ENCODE measurements at regions of chr4 and their contacts with region 1.

Region 1: GRCh38 chr4:47485047-47485692 is at the start of gene ATP10D:
- DNase-seq: peak; percentile 90 to 93 (median 91)
- H3K4me3 ChIP-seq: peak within 1 kb of the TSS; percentile 64 to 94 (median 94)
- H3K4me3 Mint-ChIP-seq: peak within 1 kb of the TSS; percentile 98
- H3K27ac ChIP-seq: peak within 1 kb of the TSS; percentile 93 to 97
- H3K27ac Mint-ChIP-seq: peak within 1 kb of the TSS; percentile 98 to 100 (median 99)
- H3K4me1 ChIP-seq: peaks cover 38 to 60% of the 10 kb centered on the region in 2 donors
- H3K4me1 Mint-ChIP-seq: peaks cover 38% of the 10 kb centered on the region
- H3K27me3 ChIP-seq: no peaks in the 10 kb centered on the region
- H3K27me3 Mint-ChIP-seq: no peaks in the 10 kb centered on the region
- CTCF ChIP-seq: no peak
- polyA plus RNA-seq, gene ATP10D: 8.4 to 16.9 (median 14.1) TPM

Region 2: DNA sequence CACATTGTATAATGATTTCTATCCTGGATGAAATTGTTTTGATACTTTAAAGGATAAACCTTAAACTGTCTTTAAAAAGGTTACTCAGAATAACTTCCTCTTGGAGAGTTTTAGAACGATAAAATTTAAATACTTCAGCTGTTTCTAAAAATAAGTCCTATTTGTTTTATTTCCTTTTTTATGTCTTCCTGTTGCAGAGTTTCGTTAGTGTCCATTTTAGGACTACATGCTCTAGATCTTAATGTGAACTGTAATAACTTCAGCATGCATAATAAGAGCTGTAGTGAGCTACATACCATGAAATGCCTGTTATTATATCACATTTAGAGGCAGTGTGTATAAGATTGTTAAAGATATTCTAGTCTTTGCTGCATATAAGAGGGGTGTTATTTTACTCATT is 14.5 kb after region 1 on chr4:
- intact Hi-C with region 1: no loop called
- DNase-seq: peak in 1 of 3 donors; percentile 32
- H3K4me3 ChIP-seq: peak overlapping the region; percentile 2 to 59 (median 21)
- H3K4me3 Mint-ChIP-seq: no peak overlapping the region
- H3K27ac ChIP-seq: peak overlapping the region in 1 of 2 donors; percentile 77
- H3K27ac Mint-ChIP-seq: no peak overlapping the region
- H3K4me1 ChIP-seq: peaks cover 23 to 24% of the 10 kb centered on the region in 2 donors
- H3K4me1 Mint-ChIP-seq: peaks cover 5% of the 10 kb centered on the region
- H3K27me3 ChIP-seq: no peaks in the 10 kb centered on the region
- H3K27me3 Mint-ChIP-seq: no peaks in the 10 kb centered on the region
- CTCF ChIP-seq: no peak

Region 3: GRCh38 chr4:48033825-48034413 is 548.7 kb after region 1 on chr4:
- intact Hi-C with region 1: loop called in 1 of 2 experiments (anchors 10 kb)
- DNase-seq: peak; percentile 38 to 74 (median 65)
- H3K4me3 ChIP-seq: no peak overlapping the region
- H3K4me3 Mint-ChIP-seq: no peak overlapping the region
- H3K27ac ChIP-seq: no peak overlapping the region
- H3K27ac Mint-ChIP-seq: no peak overlapping the region
- H3K4me1 ChIP-seq: peaks cover 18 to 27% of the 10 kb centered on the region in 2 donors
- H3K4me1 Mint-ChIP-seq: peaks cover 25% of the 10 kb centered on the region
- H3K27me3 ChIP-seq: no peaks in the 10 kb centered on the region
- H3K27me3 Mint-ChIP-seq: peaks cover 0 to 2% (median 1%) of the 10 kb centered on the region in 3 donors
- CTCF ChIP-seq: peak; percentile 84

Measured in CD14-positive monocyte (primary cell).